ENCODE measurements at regions of chr10 and their contacts with region 1.

Region 1: GRCh38 chr10:79562135-79562756 is 2.0 kb upstream of the SFTPA2 start:
- DNase-seq: peak; percentile 82
- H3K4me3 ChIP-seq: no peak overlapping the region
- H3K27ac ChIP-seq: no peak overlapping the region
- H3K4me1 ChIP-seq: peaks cover 19% of the 10 kb centered on the region
- CTCF ChIP-seq: peak; percentile 98

Region 2: GRCh38 chr10:79608505-79609375 is 46.5 kb after region 1 on chr10:
- CTCF ChIA-PET with region 1: no interaction called
- POLR2A ChIA-PET with region 1: no interaction called
- intact Hi-C with region 1: loop called (anchors 1 kb)
- DNase-seq: peak; percentile 79
- H3K4me3 ChIP-seq: no peak overlapping the region
- H3K27ac ChIP-seq: no peak overlapping the region
- H3K4me1 ChIP-seq: peaks cover 32% of the 10 kb centered on the region
- CTCF ChIP-seq: peak; percentile 93

Region 3: DNA sequence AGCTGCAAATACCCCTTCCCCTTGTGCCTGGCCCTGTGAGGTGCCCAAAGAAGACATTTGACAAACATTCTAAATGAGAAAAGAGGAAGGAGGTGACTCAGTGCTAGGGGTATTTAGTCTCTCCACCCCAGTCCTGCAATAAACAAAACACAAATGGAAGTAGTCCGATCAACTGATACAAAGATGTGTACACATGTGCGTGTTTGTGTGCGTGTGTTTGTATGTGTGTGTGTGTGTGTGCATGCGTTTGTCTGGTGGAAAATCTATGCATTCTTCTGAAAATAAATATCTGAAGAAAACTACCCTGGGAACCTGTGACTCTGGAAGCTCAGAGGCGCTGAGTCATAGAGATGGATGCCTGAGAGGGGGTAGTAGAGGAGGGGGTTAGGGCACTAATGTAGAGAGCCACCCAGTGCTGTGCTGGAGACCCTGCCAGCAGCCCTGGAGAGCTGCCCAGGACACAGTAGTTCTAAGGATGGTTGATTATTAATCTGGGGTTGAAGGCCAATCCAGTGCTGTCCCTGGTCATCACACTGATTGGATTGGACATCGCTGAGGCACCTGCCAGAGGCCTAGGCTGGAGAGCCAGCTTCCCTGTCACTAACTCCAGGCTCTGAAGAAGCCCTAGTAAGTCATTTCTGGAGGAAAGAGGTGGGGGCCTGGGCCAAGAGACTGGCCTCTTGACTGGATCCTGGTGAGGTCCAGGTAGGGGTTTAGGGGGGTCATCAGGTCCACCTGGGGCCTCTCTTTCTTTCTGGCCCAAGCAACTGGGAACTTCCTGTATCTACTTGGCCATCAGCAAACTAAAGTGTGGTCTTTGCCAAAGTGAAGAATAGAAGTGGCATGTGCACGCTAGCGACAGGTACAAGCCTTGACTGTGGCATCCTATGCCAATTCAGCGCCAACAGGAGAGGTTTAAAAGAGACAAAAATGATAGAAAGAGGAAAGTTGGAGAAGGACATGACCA is 67.0 kb after region 1 on chr10:
- CTCF ChIA-PET with region 1: no interaction called
- POLR2A ChIA-PET with region 1: no interaction called
- intact Hi-C with region 1: no loop called
- DNase-seq: no peak
- H3K4me3 ChIP-seq: no peak overlapping the region
- H3K27ac ChIP-seq: no peak overlapping the region
- H3K4me1 ChIP-seq: no peaks in the 10 kb centered on the region
- CTCF ChIP-seq: no peak

Region 4: DNA sequence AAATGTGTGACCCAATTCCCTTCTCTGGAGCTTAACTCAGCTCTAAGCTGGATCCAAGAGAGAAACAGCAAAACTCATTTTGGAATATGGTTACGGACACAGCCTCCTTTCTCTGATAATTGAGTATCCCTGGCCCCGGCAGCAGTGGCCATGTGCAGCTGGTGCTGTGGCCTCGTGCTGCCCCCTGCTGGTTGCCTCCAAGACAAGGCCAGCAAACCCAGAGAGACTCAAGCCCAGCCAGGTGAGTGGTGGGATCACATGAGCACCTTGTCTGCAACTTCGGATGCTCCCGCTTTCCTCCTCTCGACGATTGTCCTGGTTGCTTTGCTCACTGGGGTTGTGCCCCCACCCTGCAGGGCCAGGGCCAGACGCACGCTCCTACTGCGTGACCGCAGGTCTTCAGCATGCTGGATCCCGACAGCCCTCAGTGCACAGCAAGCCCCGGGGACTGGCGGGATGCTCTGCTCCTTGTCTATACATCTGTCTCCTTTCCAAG is 367.2 kb after region 1 on chr10:
- CTCF ChIA-PET with region 1: no interaction called
- POLR2A ChIA-PET with region 1: no interaction called
- intact Hi-C with region 1: loop called (anchors 1 kb)
- DNase-seq: peak; percentile 62
- H3K4me3 ChIP-seq: no peak overlapping the region
- H3K27ac ChIP-seq: no peak overlapping the region
- H3K4me1 ChIP-seq: no peaks in the 10 kb centered on the region
- CTCF ChIP-seq: peak; percentile 82

Measured in OCI-LY7 (cell line).